HepG2 (cell line): ENCODE measurements at regions of chr1 and their contacts with region 1.

Region 1: DNA sequence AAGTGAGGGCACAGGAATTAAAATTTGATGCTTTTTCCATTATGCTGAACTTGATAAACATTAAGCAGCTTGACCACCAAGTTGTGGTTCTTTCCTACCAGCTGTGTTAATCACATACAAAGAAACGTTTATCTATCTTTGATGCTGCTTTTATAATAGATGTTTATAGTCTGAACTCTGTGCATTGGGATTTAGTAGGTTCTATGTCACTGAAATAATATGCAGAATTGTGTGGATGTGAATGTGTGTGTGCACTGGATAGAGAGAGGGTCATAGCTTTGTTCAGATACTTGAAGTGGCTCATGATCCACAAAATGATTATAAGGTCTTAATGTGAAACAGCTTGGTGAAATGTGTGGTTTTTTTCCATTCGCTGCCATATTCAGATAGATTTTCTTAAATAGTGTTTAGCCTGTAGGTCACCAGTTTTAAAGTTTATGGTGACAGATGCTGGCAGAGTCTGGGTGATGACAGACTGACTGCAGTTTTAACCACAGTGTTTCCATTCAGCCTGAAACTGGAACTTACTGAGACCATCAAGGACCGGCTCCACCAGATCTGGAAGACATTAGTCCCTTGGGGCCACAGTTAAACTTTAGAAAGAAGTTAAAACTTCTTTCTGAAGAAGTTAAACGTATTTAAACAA is 10.2 kb downstream of the DDI2 start:
- DNase-seq: no peak
- ATAC-seq: no peak
- H3K4me3 ChIP-seq: no peak overlapping the region
- H3K27ac ChIP-seq: no peak overlapping the region
- H3K4me1 ChIP-seq: peaks cover 47% of the 10 kb centered on the region
- H3K27me3 ChIP-seq: no peaks in the 10 kb centered on the region
- CTCF ChIP-seq: no peak
- EP300 ChIP-seq: no peak
- POLR2A ChIP-seq: no peak
- RAD21 ChIP-seq: no peak

Region 2: GRCh38 chr1:15046487-15047165 is 580.8 kb before region 1 on chr1:
- CTCF ChIA-PET with region 1: no interaction called
- POLR2A ChIA-PET with region 1: no interaction called
- in situ Hi-C with region 1: no loop called
- intact Hi-C with region 1: no loop called
- DNase-seq: peak; percentile 48
- ATAC-seq: peak; percentile 78
- H3K4me3 ChIP-seq: no peak overlapping the region
- H3K27ac ChIP-seq: no peak overlapping the region
- H3K4me1 ChIP-seq: no peaks in the 10 kb centered on the region
- H3K27me3 ChIP-seq: no peaks in the 10 kb centered on the region
- CTCF ChIP-seq: peak; percentile 88
- EP300 ChIP-seq: no peak
- POLR2A ChIP-seq: no peak
- RAD21 ChIP-seq: peak; percentile 79

Region 3: GRCh38 chr1:15584489-15585363 is 42.7 kb before region 1 on chr1 and contains the start of gene AGMAT:
- CTCF ChIA-PET with region 1: no interaction called
- POLR2A ChIA-PET with region 1: no interaction called
- in situ Hi-C with region 1: no loop called
- intact Hi-C with region 1: loop called (anchors 5 kb)
- DNase-seq: peak; percentile 91
- ATAC-seq: peak; percentile 93
- H3K4me3 ChIP-seq: peak within 1 kb of the TSS; percentile 72 to 85 (median 84)
- H3K27ac ChIP-seq: peak within 1 kb of the TSS; percentile 100
- H3K4me1 ChIP-seq: peaks cover 47% of the 10 kb centered on the region
- H3K27me3 ChIP-seq: no peaks in the 10 kb centered on the region
- CTCF ChIP-seq: peak; percentile 63
- EP300 ChIP-seq: peak; percentile 80 to 84
- POLR2A ChIP-seq: peak; percentile 88 to 93
- RAD21 ChIP-seq: no peak; the same call in 1 of the 2 replicates
- total RNA-seq, gene AGMAT: 174 and 216 TPM in 2 replicates

Region 4: DNA sequence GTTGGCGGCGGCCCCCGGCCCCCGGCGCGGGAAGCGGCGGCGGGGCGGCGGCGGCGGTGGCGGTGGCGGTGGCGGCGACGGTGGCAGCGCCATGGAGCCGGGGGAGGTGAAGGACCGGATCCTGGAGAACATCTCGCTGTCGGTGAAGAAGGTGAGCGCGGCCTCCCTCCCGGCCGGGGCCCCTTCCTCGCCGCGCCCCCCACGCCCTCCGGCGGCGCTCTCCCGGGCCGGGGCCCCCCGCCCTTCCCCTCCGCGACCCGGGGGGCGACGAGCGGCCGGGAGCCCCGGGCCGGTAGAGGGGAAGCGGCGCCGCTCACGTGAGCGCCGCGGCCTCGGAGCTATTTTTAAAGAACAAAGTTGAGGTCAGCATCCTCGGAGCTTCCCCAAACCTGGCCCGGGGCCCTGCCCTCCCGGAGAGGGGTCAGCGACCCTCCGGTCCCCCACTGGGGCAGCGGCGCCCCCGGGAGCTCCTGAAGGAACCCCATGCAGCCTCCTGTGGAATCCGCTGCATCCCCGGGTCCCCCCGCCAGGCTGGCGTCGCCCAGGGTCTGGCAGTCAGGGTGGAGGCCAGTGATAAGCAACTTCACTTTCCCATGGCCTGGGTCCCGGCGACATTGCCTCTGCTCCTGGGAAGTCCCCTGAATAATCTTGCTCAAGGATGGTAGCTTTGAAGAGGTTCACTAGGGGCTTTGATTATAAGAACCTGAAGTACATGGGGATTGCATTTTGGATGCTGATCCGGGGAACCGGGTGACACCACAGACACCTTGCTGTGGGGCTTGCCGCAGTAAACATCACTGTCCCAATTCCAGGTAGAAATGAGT is 57.2 kb after region 1 on chr1:
- CTCF ChIA-PET with region 1: no interaction called
- POLR2A ChIA-PET with region 1: no interaction called
- in situ Hi-C with region 1: no loop called
- intact Hi-C with region 1: loop called (anchors 10 kb)
- DNase-seq: no peak
- ATAC-seq: peak; percentile 59
- H3K4me3 ChIP-seq: peak overlapping the region; percentile 59 to 92 (median 88)
- H3K27ac ChIP-seq: peak overlapping the region; percentile 52
- H3K4me1 ChIP-seq: peaks cover 62% of the 10 kb centered on the region
- H3K27me3 ChIP-seq: no peaks in the 10 kb centered on the region
- CTCF ChIP-seq: no peak
- EP300 ChIP-seq: no peak
- POLR2A ChIP-seq: no peak
- RAD21 ChIP-seq: no peak